OCI-LY7 (cell line): ENCODE measurements at regions of chr15 and their contacts with region 1.

Region 1: DNA sequence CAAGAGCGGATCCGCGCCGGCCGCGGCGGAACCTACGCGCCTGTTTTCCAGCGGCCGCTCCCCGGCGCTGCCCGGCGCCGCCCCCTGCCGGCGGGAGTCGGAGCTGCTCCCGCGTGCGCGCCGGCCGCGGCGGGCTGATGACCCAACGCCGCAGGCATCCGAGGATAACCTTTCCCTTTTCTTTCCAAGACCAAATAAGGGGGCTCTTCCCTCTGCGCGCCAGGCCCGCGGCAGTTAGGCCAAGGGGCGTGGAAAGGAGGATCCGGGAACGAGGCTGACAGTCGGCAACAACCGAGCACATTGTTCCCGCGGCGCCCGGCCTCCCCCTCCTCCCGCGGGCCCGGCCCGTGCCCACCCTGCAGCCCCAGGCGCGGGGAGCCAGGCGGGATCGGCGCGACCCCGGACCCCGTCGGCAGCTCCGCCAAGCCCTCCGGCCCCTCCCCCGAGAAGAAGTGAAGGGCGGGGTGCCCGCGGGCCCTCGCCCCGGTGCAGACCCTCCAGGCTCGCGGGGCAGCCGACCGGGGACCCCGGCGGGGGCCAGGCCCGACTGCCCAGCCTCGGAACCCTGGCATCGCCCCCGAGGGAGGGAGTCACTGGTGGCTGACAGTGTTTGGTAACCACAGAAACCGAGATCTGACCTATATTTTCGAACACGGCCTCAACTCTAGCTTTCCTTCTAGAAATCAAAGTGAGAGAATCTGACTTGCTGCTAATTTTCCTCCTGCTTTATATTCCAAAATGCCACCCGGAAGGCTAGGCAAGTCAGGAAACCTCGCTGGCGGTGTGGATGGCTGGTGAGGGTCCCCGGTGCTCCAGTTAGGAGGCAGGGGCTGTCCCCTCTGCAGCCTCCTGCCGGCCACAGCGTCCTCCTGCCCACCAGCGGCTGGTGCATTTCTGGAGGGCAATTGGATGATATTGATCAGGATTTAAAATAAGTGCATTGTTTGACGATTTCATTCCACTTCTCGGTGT is 45.6 kb upstream of the SYNM start:
- DNase-seq: no peak
- H3K4me3 ChIP-seq: no peak overlapping the region
- H3K27ac ChIP-seq: no peak overlapping the region
- H3K4me1 ChIP-seq: no peaks in the 10 kb centered on the region
- CTCF ChIP-seq: peak; percentile 24; the same call in 1 of the 2 replicates

Region 2: GRCh38 chr15:98914626-98915025 is 144.7 kb before region 1 on chr15:
- CTCF ChIA-PET with region 1: interaction called, 10 read pairs
- POLR2A ChIA-PET with region 1: no interaction called
- intact Hi-C with region 1: no loop called
- DNase-seq: no peak
- H3K4me3 ChIP-seq: no peak overlapping the region
- H3K27ac ChIP-seq: no peak overlapping the region
- H3K4me1 ChIP-seq: peaks cover 9% of the 10 kb centered on the region
- CTCF ChIP-seq: no peak